ENCODE measurements at regions of chr19 and their contacts with region 1.

Region 1: GRCh38 chr19:1812469-1813196 is 557 bp upstream of the ATP8B3 start:
- DNase-seq: peak; percentile 95
- ATAC-seq: peak; percentile 86
- H3K4me3 ChIP-seq: peak overlapping the region; percentile 56 to 61
- H3K27ac ChIP-seq: peak overlapping the region; percentile 79
- H3K4me1 ChIP-seq: peaks cover 20 to 38% of the 10 kb centered on the region in 2 experiments
- H3K27me3 ChIP-seq: no peaks in the 10 kb centered on the region
- CTCF ChIP-seq: peak in 2 of 3 experiments; percentile 85 to 90; a peak in 5 of 6 replicates
- POLR2A ChIP-seq: peak; percentile 22
- RAD21 ChIP-seq: peak; percentile 96

Region 2: GRCh38 chr19:1605236-1606137 is 207.1 kb before region 1 on chr19 and contains the start of gene UQCR11:
- CTCF ChIA-PET with region 1: no interaction called
- POLR2A ChIA-PET with region 1: no interaction called
- RAD21 ChIA-PET with region 1: no interaction called
- intact Hi-C with region 1: loop called (anchors 10 kb)
- DNase-seq: peak; percentile 92
- ATAC-seq: peak; percentile 88
- H3K4me3 ChIP-seq: peak within 1 kb of the TSS; percentile 97 to 98
- H3K27ac ChIP-seq: peak within 1 kb of the TSS; percentile 81
- H3K4me1 ChIP-seq: peaks cover 18 to 55% of the 10 kb centered on the region in 2 experiments; a peak in 3 of 4 replicates
- H3K27me3 ChIP-seq: no peaks in the 10 kb centered on the region
- CTCF ChIP-seq: peak in 2 of 3 experiments; percentile 36 to 37; a peak in 4 of 6 replicates
- POLR2A ChIP-seq: peak; percentile 93
- RAD21 ChIP-seq: no peak; the same call in 1 of the 2 replicates
- total RNA-seq, gene UQCR11: 303 TPM

Region 3: GRCh38 chr19:1624458-1624857 is 188.2 kb before region 1 on chr19:
- CTCF ChIA-PET with region 1: no interaction called
- POLR2A ChIA-PET with region 1: no interaction called
- RAD21 ChIA-PET with region 1: no interaction called
- intact Hi-C with region 1: loop called (anchors 2 kb)
- DNase-seq: peak; percentile 43
- ATAC-seq: peak; percentile 83
- H3K4me3 ChIP-seq: no peak overlapping the region
- H3K27ac ChIP-seq: no peak overlapping the region
- H3K4me1 ChIP-seq: no peaks in the 10 kb centered on the region
- H3K27me3 ChIP-seq: no peaks in the 10 kb centered on the region
- CTCF ChIP-seq: peak; percentile 50 to 95 (median 86); a peak in 5 of 6 replicates
- POLR2A ChIP-seq: no peak
- RAD21 ChIP-seq: peak; percentile 67

Region 4: DNA sequence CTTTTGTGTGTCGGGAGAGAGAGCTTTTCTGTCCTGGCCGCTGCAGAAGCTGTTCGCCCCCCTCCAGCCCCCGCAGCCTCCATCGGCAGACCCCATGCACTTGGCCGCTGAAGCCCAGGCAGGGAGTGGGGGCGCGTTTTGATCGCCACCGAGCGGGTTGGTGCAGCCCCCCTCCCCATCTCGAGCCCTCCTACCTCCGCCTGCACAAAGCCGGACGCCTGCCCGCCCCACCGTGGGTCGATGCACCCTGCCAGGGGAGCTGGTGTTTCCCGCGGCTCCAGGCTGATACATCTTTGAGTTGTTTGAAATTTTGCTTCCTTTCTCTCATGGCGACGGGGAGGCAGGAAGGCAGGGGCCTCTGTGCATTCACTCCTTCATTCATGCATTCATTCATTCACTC is 75.7 kb before region 1 on chr19:
- CTCF ChIA-PET with region 1: no interaction called
- POLR2A ChIA-PET with region 1: no interaction called
- RAD21 ChIA-PET with region 1: no interaction called
- intact Hi-C with region 1: no loop called
- DNase-seq: no peak
- ATAC-seq: no peak
- H3K4me3 ChIP-seq: no peak overlapping the region
- H3K27ac ChIP-seq: no peak overlapping the region
- H3K4me1 ChIP-seq: no peaks in the 10 kb centered on the region
- H3K27me3 ChIP-seq: no peaks in the 10 kb centered on the region
- CTCF ChIP-seq: no peak
- POLR2A ChIP-seq: no peak
- RAD21 ChIP-seq: no peak

Measured in HCT116 (cell line).